ENCODE measurements at regions of chr3 and their contacts with region 1.

Region 1: GRCh38 chr3:39154280-39155021 is 1.1 kb upstream of the CSRNP1 start:
- DNase-seq: peak in 1 of 14 experiments; percentile 13
- ATAC-seq: no peak
- H3K4me3 ChIP-seq: no peak overlapping the region
- H3K4me3 Mint-ChIP-seq: peak overlapping the region; percentile 92
- H3K27ac ChIP-seq: no peak overlapping the region
- H3K27ac Mint-ChIP-seq: peak overlapping the region; percentile 93
- H3K4me1 ChIP-seq: peaks cover 42% of the 10 kb centered on the region
- H3K4me1 Mint-ChIP-seq: peaks cover 39% of the 10 kb centered on the region
- H3K27me3 ChIP-seq: no peaks in the 10 kb centered on the region
- H3K27me3 Mint-ChIP-seq: peaks cover 4% of the 10 kb centered on the region
- CTCF ChIP-seq: no peak

Region 2: DNA sequence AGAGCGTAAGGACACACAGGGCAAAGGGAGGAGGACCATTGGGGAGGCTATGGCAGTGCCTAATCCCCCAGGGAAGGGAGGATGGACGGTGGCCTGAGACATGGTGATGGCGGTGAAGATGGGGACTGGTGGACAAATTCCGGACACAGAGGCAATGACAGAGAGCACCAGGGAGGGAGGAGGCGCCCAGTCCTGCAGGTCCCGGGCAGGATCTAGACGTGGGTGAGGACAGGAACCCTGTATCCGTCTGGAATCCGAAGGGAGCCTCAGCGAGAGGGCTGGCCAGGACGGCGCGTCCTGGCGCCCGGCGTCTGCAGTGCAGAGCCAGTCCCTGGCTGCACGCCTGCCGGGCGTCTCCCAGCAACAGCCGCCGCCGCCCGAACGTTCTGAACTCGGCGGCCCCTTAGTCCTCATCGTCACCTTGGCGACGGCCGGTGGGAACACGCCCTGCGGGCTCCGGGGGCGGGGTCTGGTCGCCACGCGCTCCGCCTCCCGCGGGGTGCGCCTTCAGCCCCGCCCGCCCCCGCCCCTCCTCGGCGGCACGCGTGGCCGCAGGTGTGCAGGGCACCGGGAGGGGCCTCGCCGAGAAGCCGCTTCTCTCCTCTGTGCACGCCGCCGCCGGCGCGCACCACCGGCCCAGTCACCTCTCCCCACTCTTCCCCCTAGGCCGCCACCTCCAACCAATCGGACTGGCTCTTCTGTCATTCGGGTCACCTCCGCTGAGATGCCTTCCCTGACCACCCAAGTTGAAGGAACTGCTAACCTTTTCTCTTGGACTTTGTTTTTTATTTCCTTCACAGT is 26.3 kb after region 1 on chr3:
- CTCF ChIA-PET with region 1: no interaction called
- POLR2A ChIA-PET with region 1: interaction called, 3 read pairs
- intact Hi-C with region 1: loop called in 1 of 2 experiments (anchors 1 kb)
- DNase-seq: peak; percentile 82 to 96 (median 88)
- ATAC-seq: peak; percentile 88
- H3K4me3 ChIP-seq: peak overlapping the region; percentile 53
- H3K4me3 Mint-ChIP-seq: peak overlapping the region; percentile 82
- H3K27ac ChIP-seq: peak overlapping the region; percentile 47 to 48
- H3K27ac Mint-ChIP-seq: peak overlapping the region; percentile 71
- H3K4me1 ChIP-seq: peaks cover 40% of the 10 kb centered on the region
- H3K4me1 Mint-ChIP-seq: peaks cover 28% of the 10 kb centered on the region
- H3K27me3 ChIP-seq: no peaks in the 10 kb centered on the region
- H3K27me3 Mint-ChIP-seq: no peaks in the 10 kb centered on the region
- CTCF ChIP-seq: no peak

Measured in CD4-positive, alpha-beta T cell (primary cell).